Activated CD4-positive, alpha-beta T cell treated with anti-CD3 and anti-CD28 coated beads for 36 hours (primary cell): ENCODE measurements at regions of chr21 and their contacts with region 1.

Region 1: GRCh38 chr21:10539956-10540355 is 18.6 kb downstream of the TPTE start:
- DNase-seq: no peak
- ATAC-seq: no peak
- H3K4me3 Mint-ChIP-seq: no peak overlapping the region
- H3K27ac Mint-ChIP-seq: no peak overlapping the region
- H3K4me1 Mint-ChIP-seq: no peaks in the 10 kb centered on the region
- H3K27me3 Mint-ChIP-seq: no peaks in the 10 kb centered on the region

Region 2: GRCh38 chr21:9774347-9774746 is 765.6 kb before region 1 on chr21:
- CTCF ChIA-PET with region 1: no interaction called
- POLR2A ChIA-PET with region 1: no interaction called
- intact Hi-C with region 1: no loop called
- DNase-seq: no peak
- ATAC-seq: no peak
- H3K4me3 Mint-ChIP-seq: no peak overlapping the region
- H3K27ac Mint-ChIP-seq: no peak overlapping the region
- H3K4me1 Mint-ChIP-seq: no peaks in the 10 kb centered on the region
- H3K27me3 Mint-ChIP-seq: no peaks in the 10 kb centered on the region

Region 3: GRCh38 chr21:10272216-10272615 is 267.7 kb before region 1 on chr21:
- CTCF ChIA-PET with region 1: no interaction called
- POLR2A ChIA-PET with region 1: no interaction called
- intact Hi-C with region 1: no loop called
- DNase-seq: peak; percentile 19
- ATAC-seq: peak; percentile 89
- H3K4me3 Mint-ChIP-seq: no peak overlapping the region
- H3K27ac Mint-ChIP-seq: no peak overlapping the region
- H3K4me1 Mint-ChIP-seq: no peaks in the 10 kb centered on the region
- H3K27me3 Mint-ChIP-seq: no peaks in the 10 kb centered on the region

Region 4: GRCh38 chr21:10521091-10521598 is 18.8 kb before region 1 on chr21 and contains the start of gene TPTE:
- CTCF ChIA-PET with region 1: no interaction called
- POLR2A ChIA-PET with region 1: no interaction called
- intact Hi-C with region 1: loop called in 1 of 2 experiments (anchors 2 kb)
- DNase-seq: no peak
- ATAC-seq: no peak
- H3K4me3 Mint-ChIP-seq: no peak within 1 kb of the TSS
- H3K27ac Mint-ChIP-seq: no peak within 1 kb of the TSS
- H3K4me1 Mint-ChIP-seq: no peaks in the 10 kb centered on the region
- H3K27me3 Mint-ChIP-seq: no peaks in the 10 kb centered on the region
- total RNA-seq, gene TPTE: not detected

Region 5: GRCh38 chr21:10575311-10575667 is 35.3 kb after region 1 on chr21:
- CTCF ChIA-PET with region 1: no interaction called
- POLR2A ChIA-PET with region 1: no interaction called
- intact Hi-C with region 1: no loop called
- DNase-seq: no peak
- ATAC-seq: no peak
- H3K4me3 Mint-ChIP-seq: no peak overlapping the region
- H3K27ac Mint-ChIP-seq: no peak overlapping the region
- H3K4me1 Mint-ChIP-seq: no peaks in the 10 kb centered on the region
- H3K27me3 Mint-ChIP-seq: no peaks in the 10 kb centered on the region